ENCODE measurements at regions of chr7 and their contacts with region 1.

Region 1: GRCh38 chr7:105876091-105876963 is at the start of gene ATXN7L1:
- ATAC-seq: peak; percentile 88 to 94 (median 93)
- H3K4me3 ChIP-seq: peak within 1 kb of the TSS; percentile 53 to 98 (median 77)
- H3K27ac ChIP-seq: peak within 1 kb of the TSS; percentile 87
- H3K4me1 ChIP-seq: peaks cover 17 to 30% of the 10 kb centered on the region in 2 donors
- total RNA-seq, gene ATXN7L1: 6.5 to 23.7 (median 10.6) TPM

Region 2: DNA sequence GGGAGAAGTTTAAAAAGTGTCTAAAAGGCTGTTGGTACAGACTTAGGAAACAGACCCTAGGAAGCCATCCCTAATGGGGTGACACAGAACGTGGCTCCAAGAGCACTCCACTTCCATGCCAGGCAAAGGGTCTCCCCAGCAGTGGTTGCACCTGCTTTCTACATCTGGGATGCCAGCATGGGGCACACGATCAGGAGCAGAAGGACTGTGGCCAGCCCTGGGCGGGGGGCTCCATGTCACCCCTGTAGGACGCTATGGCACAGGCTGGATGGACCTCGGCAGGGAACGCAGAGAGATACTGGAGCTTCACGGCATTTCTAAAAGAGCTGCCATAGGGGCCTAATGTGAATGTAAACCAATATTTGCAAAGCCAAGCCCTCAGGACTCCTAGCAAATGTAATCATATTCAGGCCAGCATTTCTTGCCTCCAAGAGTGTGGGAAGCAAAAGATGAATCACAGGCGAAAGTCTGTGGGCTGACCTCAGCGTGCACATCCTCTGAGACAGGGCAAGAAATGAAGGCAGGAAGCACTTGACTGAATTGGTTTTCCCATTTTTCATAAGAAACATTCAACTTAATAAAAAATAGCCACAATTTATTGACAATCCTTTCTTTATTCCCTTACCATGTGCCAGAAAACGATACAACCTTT is 93.8 kb before region 1 on chr7:
- in situ Hi-C with region 1: no loop called
- ATAC-seq: peak in 5 of 8 experiments; percentile 58 to 89 (median 78)
- H3K4me3 ChIP-seq: no peak overlapping the region
- H3K27ac ChIP-seq: no peak overlapping the region
- H3K4me1 ChIP-seq: no peaks in the 10 kb centered on the region

Region 3: GRCh38 chr7:106009403-106010226 is 133.3 kb after region 1 on chr7:
- in situ Hi-C with region 1: loop called in 1 of 9 experiments (anchors 25 kb)
- ATAC-seq: peak; percentile 86 to 96 (median 94)
- H3K4me3 ChIP-seq: no peak overlapping the region
- H3K27ac ChIP-seq: peak overlapping the region; percentile 2 to 33
- H3K4me1 ChIP-seq: peaks cover 16 to 19% of the 10 kb centered on the region in 2 donors